Breast epithelium (tissue), 4 donors: ENCODE measurements at regions of chr1 and their contacts with region 1.

Region 1: GRCh38 chr1:238088560-238089290 is 198.0 kb upstream of the ZP4 start:
- DNase-seq: no peak
- H3K4me3 ChIP-seq: no peak overlapping the region
- H3K27ac ChIP-seq: no peak overlapping the region
- H3K4me1 ChIP-seq: no peaks in the 10 kb centered on the region
- H3K27me3 ChIP-seq: no peaks in the 10 kb centered on the region
- CTCF ChIP-seq: no peak
- POLR2A ChIP-seq: no peak

Region 2: DNA sequence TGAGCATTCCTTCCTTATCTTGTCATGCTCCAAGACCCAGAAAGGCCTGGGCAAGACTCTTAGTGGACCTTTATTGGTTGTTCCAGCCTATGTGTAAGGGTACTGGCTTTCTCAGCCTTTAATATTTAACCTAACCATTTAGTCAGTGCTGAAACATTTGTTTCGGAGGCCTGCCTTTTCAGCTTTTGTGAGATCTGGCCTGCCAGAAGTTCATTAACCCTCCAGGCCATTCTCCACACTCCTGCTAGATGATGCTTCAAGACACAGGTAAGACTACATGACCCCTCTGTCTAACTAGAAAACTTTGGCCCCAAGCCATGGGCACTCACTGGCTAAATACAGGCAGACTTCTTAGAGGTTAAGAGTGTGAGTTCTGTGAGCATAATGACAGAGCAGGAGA is 59.6 kb before region 1 on chr1:
- intact Hi-C with region 1: no loop called
- DNase-seq: no peak
- H3K4me3 ChIP-seq: no peak overlapping the region
- H3K27ac ChIP-seq: no peak overlapping the region
- H3K4me1 ChIP-seq: no peaks in the 10 kb centered on the region
- H3K27me3 ChIP-seq: no peaks in the 10 kb centered on the region
- CTCF ChIP-seq: no peak
- POLR2A ChIP-seq: no peak

Region 3: GRCh38 chr1:238073991-238074390 is 14.7 kb before region 1 on chr1:
- intact Hi-C with region 1: loop called (anchors 1 kb)
- DNase-seq: no peak
- H3K4me3 ChIP-seq: no peak overlapping the region
- H3K27ac ChIP-seq: no peak overlapping the region
- H3K4me1 ChIP-seq: no peaks in the 10 kb centered on the region
- H3K27me3 ChIP-seq: no peaks in the 10 kb centered on the region
- CTCF ChIP-seq: no peak
- POLR2A ChIP-seq: no peak

Region 4: GRCh38 chr1:238443687-238444086 is 355.0 kb after region 1 on chr1:
- intact Hi-C with region 1: loop called (anchors 5 kb)
- DNase-seq: no peak
- H3K4me3 ChIP-seq: no peak overlapping the region
- H3K27ac ChIP-seq: no peak overlapping the region
- H3K4me1 ChIP-seq: no peaks in the 10 kb centered on the region
- H3K27me3 ChIP-seq: no peaks in the 10 kb centered on the region
- CTCF ChIP-seq: no peak
- POLR2A ChIP-seq: no peak